Right ventricle myocardium inferior (tissue), 1 donor: ENCODE measurements at regions of chr5 and their contacts with region 1.

Region 1: GRCh38 chr5:151080623-151081430 is at the start of gene TNIP1:
- DNase-seq: peak; percentile 95
- ATAC-seq: peak; percentile 96
- total RNA-seq, gene TNIP1: 114 TPM

Region 2: DNA sequence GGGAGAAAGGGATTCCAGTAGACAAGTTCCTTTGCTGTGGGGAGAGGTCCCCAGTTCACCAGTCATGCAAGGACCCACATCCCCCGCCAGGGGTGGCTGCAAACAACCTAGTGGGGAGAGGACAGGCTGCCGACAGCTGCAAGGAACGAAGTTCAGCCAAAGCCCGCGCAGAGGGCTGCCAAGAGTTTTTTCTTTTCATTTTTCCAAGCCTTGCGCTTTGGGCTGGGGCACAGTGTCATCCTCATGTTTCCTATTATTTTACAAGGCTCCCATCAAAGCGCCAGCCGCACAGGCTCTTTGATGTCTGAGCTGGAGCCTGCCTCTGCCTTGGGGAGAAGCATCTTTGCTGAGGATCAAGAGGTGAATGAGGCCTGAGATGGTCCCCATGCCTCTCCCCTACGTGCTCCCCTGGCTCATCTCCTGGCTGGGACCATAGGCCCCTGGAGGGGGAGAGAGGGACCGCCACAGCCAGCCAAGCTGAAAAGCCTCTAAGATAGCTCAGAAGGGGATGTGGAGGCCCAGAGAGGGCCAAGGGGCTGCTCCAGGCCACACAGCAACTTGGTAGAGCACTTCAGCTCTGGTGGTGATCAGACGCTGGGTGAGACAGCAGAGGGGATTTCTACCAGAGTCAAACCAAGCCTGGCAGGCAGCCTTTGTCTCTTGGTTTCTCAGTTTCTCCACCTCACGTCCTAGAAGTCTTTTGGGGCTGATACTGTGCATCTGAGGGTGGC is 490.8 kb before region 1 on chr5:
- intact Hi-C with region 1: no loop called
- DNase-seq: peak; percentile 83
- ATAC-seq: peak; percentile 78

Region 3: DNA sequence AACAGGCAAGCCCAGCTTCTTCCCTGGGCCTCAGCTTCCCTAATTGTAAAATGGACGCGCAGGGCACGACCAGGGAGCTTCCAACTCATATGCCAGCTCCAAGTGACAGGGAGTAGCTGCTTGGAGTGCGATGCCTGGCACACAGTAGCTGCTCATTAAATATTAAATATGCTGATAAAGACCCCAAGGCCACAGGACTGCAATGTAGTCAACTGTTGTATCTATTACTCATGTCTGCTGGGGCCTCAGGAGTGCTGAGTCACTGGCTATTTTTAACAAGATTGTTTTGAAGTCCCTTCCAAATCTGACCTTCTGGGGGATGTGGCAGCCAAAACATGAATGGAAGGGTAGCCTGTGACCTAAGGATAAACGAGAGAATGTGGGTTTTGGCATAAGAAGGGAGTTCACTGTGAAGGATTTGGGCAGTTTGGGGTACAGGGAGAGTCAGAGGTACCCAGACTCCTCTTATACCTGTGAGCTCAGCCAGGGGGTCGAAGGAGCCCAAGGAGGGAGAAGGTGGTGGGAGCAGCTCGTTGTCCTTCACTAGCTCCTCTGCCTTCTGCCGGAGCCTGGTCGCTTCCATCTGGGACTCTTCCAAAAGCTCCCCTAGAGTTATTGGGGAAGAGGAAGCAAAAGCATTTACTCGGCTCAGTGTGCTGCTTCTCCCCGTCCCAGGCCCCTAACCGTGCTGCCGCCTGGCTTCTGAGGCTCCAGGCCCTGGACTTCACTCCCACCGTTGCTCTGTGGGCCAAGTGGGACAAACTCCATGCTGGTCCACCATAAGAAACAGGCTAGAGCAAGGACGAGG is 17.5 kb before region 1 on chr5:
- intact Hi-C with region 1: loop called (anchors 2 kb)
- DNase-seq: no peak
- ATAC-seq: peak; percentile 66